Calu3 (cell line): ENCODE measurements at regions of chr19 and their contacts with region 1.

Region 1: DNA sequence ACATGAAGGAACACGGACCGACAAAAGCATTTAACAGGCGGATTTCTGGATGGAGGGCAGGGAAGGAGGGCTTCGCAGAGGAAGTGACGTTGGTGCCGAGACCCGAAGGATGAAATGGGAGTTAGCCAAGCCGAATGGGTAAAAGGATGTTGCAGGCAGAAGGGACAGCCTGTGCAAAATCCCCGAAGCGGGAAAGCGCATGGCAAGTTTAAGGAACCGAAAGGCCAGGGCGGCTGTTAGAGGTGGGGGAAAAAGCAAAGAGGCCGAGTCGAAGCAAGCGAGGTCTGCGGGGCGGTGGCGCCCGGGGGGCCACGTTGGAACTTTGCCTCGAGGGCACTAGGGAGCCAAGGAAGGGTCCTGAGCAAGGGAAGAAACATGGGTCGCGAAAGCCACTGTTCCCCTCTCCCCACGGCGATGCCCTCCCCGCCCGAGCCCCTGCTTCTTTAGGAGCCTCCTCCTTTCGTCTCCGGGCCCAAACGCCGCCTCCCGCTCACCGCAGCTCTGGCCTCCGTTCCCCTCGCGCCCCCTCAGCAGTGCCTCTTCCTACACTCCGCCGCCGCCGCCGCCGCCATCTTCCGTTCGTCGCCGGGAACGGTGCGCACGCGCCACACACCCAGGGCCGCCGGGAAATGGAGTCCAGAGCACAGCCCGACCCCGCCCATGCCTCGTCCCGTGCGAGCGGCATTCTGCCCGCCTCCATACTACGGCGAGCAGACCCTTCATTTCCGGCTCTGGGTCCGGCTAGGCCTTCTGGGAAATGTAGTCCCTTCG is at the start of gene SYMPK:
- DNase-seq: peak; percentile 100
- H3K4me3 Mint-ChIP-seq: peak within 1 kb of the TSS; percentile 98
- H3K27ac Mint-ChIP-seq: peak within 1 kb of the TSS; percentile 96
- H3K4me1 Mint-ChIP-seq: peaks cover 48% of the 10 kb centered on the region
- H3K27me3 Mint-ChIP-seq: no peaks in the 10 kb centered on the region
- CTCF ChIP-seq: no peak
- total RNA-seq, gene SYMPK: 130 and 135 TPM in 2 replicates

Region 2: GRCh38 chr19:45828945-45829344 is 33.8 kb before region 1 on chr19:
- CTCF ChIA-PET with region 1: no interaction called
- intact Hi-C with region 1: no loop called
- DNase-seq: no peak
- H3K4me3 Mint-ChIP-seq: no peak overlapping the region
- H3K27ac Mint-ChIP-seq: peak overlapping the region; percentile 59
- H3K4me1 Mint-ChIP-seq: no peaks in the 10 kb centered on the region
- H3K27me3 Mint-ChIP-seq: no peaks in the 10 kb centered on the region
- CTCF ChIP-seq: no peak

Region 3: GRCh38 chr19:45882652-45883585 is 20.2 kb after region 1 on chr19:
- CTCF ChIA-PET with region 1: interaction called, 56 read pairs
- intact Hi-C with region 1: loop called (anchors 1 kb)
- DNase-seq: peak; percentile 97
- H3K4me3 Mint-ChIP-seq: peak overlapping the region; percentile 70
- H3K27ac Mint-ChIP-seq: peak overlapping the region; percentile 23
- H3K4me1 Mint-ChIP-seq: peaks cover 45% of the 10 kb centered on the region
- H3K27me3 Mint-ChIP-seq: no peaks in the 10 kb centered on the region
- CTCF ChIP-seq: peak; percentile 99